ENCODE measurements at regions of chr1 and their contacts with region 1.

Region 1: GRCh38 chr1:147109041-147109440 is 63.2 kb downstream of the PRKAB2 start:
- DNase-seq: no peak
- H3K4me3 ChIP-seq: no peak overlapping the region
- H3K27ac ChIP-seq: no peak overlapping the region
- H3K27me3 ChIP-seq: peaks cover 0 to 17% (median 0%) of the 10 kb centered on the region in 45 donors
- CTCF ChIP-seq: no peak

Region 2: GRCh38 chr1:147201276-147201675 is 92.2 kb after region 1 on chr1:
- intact Hi-C with region 1: no loop called
- DNase-seq: no peak
- H3K4me3 ChIP-seq: no peak overlapping the region
- H3K27ac ChIP-seq: no peak overlapping the region
- H3K27me3 ChIP-seq: no peaks in the 10 kb centered on the region
- CTCF ChIP-seq: no peak

Region 3: GRCh38 chr1:147545133-147545532 is 436.1 kb after region 1 on chr1:
- intact Hi-C with region 1: no loop called
- DNase-seq: peak in 6 of 10 donors; percentile 4 to 67 (median 38)
- H3K4me3 ChIP-seq: no peak overlapping the region
- H3K27ac ChIP-seq: peak overlapping the region in 3 of 59 donors; percentile 0 to 14 (median 9)
- H3K27me3 ChIP-seq: no peaks in the 10 kb centered on the region
- CTCF ChIP-seq: no peak

Region 4: DNA sequence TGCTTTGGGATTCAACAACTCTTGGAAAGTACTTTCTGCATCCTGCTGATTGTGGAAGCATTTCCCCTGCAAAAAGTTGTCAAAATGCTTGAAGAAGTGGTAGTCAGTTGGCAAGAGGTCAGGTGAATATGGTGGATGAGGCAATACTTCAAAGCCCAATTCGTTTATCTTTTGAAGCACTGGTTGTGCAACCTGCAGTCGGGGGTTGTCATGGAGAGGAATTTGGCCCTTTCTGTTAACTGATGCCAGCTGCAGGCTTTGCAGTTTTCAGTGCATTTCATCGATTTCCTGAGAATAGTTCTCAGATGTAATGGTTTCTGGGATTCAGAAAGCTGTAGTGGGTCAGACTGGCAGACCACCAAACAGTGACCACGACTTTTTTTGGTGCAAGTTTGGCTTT is 699.0 kb after region 1 on chr1:
- intact Hi-C with region 1: loop called in 1 of 2 experiments (anchors 10 kb)
- DNase-seq: no peak
- H3K4me3 ChIP-seq: no peak overlapping the region
- H3K27ac ChIP-seq: no peak overlapping the region
- H3K27me3 ChIP-seq: peaks cover 0 to 25% (median 0%) of the 10 kb centered on the region in 45 donors
- CTCF ChIP-seq: no peak